ENCODE measurements at regions of chr5 and their contacts with region 1.

Region 1: GRCh38 chr5:172958331-172959046 is 735 bp upstream of the RPL26L1 start:
- DNase-seq: peak; percentile 86
- H3K4me3 Mint-ChIP-seq: peak overlapping the region; percentile 92
- H3K27ac Mint-ChIP-seq: peak overlapping the region; percentile 90
- H3K4me1 Mint-ChIP-seq: peaks cover 30% of the 10 kb centered on the region
- H3K27me3 Mint-ChIP-seq: peaks cover 4% of the 10 kb centered on the region

Region 2: DNA sequence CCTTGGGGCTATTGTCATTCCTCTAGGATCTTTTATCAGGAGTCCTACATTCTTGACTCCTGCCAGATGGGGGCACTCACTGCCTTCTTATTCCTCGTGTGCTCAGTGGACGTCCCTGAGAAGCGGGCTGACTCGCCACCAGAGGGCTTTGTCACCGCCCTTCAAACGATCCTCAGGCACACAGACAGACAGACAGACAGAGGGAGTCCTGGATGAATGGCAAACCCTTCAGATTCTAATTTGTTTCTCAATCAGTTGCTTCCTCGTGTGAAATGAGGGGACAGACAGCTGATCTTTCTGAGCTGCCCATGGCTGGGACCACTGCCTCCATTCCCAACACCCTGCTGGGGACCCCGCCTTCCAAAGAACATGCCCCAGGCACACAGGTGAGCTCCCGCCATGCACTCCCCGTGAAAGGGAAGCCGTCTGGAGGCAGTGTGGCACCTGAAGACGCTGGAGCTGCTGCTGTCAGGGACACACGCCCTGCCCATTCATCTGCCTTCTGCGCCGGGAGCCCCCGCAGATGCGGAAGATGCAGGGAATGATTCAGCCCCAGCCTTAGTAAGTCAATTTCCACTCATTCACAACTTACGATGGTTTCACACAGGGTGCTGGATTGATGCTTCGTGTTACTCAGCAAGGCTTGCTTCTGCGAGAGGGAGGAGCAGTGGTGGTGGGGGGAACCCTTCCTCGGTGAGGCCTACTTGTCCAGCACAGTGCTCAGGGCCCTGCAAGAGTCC is 479.3 kb before region 1 on chr5:
- intact Hi-C with region 1: loop called (anchors 10 kb)
- DNase-seq: peak; percentile 85
- H3K4me3 Mint-ChIP-seq: no peak overlapping the region
- H3K27ac Mint-ChIP-seq: no peak overlapping the region
- H3K4me1 Mint-ChIP-seq: no peaks in the 10 kb centered on the region
- H3K27me3 Mint-ChIP-seq: no peaks in the 10 kb centered on the region

Region 3: DNA sequence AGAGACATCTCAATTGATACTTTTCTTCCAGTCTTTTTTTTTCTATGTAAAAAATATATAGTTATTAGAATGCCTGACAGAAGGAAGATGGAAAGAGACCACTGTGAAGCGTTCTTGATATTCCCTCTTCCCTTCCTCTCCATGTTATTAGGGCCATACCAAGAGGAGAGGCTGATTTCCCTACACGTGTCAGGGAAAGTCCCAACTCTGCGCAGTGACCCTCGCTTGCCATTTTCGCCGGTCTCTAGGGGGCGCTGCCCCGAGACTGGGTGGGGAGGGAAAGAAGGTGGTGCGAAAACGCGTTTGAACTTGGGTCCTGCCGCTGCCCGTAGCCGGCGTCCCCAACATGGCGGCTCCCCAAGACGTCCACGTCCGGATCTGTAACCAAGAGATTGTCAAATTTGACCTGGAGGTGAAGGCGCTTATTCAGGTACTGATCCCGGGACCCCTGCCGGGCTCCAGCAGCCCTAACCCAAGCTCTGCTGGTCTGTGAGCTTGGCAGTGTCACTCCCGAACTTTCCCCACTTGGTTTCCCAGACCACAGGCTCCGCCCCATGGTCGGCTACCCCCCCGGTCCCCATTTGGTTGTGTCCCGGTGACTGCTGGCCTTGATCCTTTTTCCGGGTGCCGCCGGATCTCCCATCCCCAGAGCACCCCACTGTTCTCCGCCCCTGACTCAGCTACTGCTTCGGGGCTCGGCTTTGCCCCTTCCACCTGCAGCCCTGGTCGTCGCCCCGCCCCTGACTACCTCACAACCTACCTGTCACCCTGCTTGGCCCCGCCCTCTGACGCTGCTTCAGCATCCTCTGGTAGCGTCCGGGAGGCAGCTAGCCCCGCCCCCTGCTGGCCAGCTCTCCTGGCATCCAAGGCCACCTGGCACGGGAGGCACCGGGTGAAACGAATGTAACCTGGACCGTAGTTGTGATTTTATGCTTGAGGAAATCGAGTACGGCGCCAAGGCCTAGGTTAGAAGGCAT is 186.0 kb after region 1 on chr5 and contains the start of gene BNIP1:
- intact Hi-C with region 1: loop called (anchors 1 kb)
- DNase-seq: peak; percentile 99
- H3K4me3 Mint-ChIP-seq: peak within 1 kb of the TSS; percentile 97
- H3K27ac Mint-ChIP-seq: peak within 1 kb of the TSS; percentile 98
- H3K4me1 Mint-ChIP-seq: peaks cover 13% of the 10 kb centered on the region
- H3K27me3 Mint-ChIP-seq: no peaks in the 10 kb centered on the region
- total RNA-seq, gene BNIP1: 20.9 and 26.5 TPM in 2 replicates

Region 4: DNA sequence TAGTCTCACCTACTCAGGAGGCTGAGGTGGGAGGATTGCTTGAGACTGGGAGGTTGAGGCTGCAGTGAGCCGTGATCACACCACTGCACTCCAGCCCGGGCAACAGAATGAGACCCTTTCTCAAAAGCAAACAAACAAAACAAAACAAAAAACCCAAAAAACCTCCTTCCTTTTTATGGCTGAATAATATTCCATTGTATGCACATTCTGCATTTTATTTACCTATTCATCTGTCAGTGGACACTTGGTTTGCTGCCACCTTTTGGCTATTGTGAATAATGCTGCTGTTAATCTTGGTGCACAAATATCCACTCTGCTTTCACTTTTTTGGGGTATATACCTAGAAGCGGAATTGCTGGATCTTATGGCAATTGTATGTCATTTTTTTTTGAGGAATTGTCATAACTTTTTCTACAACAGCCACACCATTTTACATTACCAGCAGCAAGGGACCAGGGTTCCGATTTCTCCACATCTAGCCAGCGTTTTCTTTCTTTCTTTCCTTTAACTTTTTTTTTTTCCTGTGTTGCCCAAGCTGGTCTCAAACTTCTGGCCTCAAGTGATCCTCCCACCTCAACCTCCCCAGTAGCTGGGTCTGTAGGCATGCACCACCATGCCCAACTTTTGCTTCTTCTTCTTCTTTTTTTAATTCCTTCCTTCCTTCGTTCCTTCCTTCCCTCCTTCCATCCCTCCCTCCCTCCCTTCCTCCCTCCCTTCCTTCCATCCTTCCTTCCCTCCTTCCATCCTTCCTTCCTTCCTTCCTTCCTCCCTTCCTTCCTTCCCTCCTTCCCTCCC is 245.9 kb after region 1 on chr5:
- intact Hi-C with region 1: no loop called
- DNase-seq: peak; percentile 76
- H3K4me3 Mint-ChIP-seq: no peak overlapping the region
- H3K27ac Mint-ChIP-seq: no peak overlapping the region
- H3K4me1 Mint-ChIP-seq: no peaks in the 10 kb centered on the region
- H3K27me3 Mint-ChIP-seq: peaks cover 17% of the 10 kb centered on the region

Measured in activated CD4-positive, alpha-beta T cell treated with anti-CD3 and anti-CD28 coated beads, Interleukin-2, amount 10 ng/mL, durations not matched to agents 24 days and 14 days (primary cell).